Activated CD4-positive, alpha-beta memory T cell treated with anti-CD3 and anti-CD28 coated beads for 36 hours (primary cell): ENCODE measurements at regions of chr1 and their contacts with region 1.

Region 1: DNA sequence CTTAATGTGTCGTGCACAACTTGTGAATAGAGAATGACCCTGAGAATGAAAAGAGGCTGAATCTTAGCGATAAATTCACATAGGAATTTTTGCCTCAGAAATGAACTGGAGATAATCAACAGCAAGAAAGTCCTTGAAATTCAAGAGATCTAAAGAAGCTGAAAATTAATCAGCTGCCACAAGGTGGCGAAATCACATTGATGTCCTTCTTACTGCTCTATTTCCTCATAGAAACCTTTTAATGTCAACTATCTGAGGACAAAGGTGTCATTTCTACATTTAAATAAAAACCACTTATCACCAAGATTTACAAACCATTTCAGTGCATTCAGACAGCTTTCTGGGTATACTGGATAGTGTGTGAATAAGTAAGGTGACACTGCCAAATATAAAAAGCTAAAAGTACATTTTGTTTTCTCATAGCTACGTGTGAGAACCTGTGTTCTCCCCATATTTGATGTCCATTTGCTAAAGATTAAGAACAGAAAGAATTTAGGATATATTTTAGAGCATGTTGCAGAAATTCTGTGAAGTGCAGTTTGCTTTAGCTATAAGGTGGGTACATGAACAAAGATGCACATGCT is 485.3 kb upstream of the PTBP2 start:
- DNase-seq: no peak
- H3K4me3 Mint-ChIP-seq: no peak overlapping the region
- H3K27ac Mint-ChIP-seq: no peak overlapping the region
- H3K4me1 Mint-ChIP-seq: no peaks in the 10 kb centered on the region
- H3K27me3 Mint-ChIP-seq: no peaks in the 10 kb centered on the region

Region 2: GRCh38 chr1:96346708-96347107 is 110.5 kb after region 1 on chr1:
- CTCF ChIA-PET with region 1: no interaction called
- POLR2A ChIA-PET with region 1: no interaction called
- intact Hi-C with region 1: no loop called
- DNase-seq: no peak
- H3K4me3 Mint-ChIP-seq: no peak overlapping the region
- H3K27ac Mint-ChIP-seq: no peak overlapping the region
- H3K4me1 Mint-ChIP-seq: no peaks in the 10 kb centered on the region
- H3K27me3 Mint-ChIP-seq: no peaks in the 10 kb centered on the region

Region 3: DNA sequence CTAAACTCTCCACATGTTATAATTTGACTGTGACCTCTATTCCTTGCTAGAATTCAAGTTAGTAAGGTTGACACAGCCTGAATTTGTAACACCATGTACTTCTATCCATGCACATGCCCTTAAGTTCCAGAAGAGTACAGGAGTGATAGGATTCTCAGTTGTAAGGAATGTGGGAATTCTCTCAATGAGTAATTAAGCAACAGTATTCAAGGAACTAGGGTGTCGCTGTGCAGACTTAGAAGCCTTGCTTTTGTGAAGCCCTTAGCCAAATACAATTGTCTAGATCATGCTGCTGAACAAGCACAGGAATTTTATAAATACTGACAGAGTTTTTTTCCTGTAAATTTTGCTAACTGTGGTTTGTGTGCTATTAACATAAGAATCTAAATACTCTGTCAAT is 209.1 kb after region 1 on chr1:
- CTCF ChIA-PET with region 1: no interaction called
- POLR2A ChIA-PET with region 1: no interaction called
- intact Hi-C with region 1: no loop called
- DNase-seq: no peak
- H3K4me3 Mint-ChIP-seq: no peak overlapping the region
- H3K27ac Mint-ChIP-seq: no peak overlapping the region
- H3K4me1 Mint-ChIP-seq: no peaks in the 10 kb centered on the region
- H3K27me3 Mint-ChIP-seq: no peaks in the 10 kb centered on the region

Region 4: GRCh38 chr1:96756789-96757188 is 520.5 kb after region 1 on chr1:
- CTCF ChIA-PET with region 1: no interaction called
- POLR2A ChIA-PET with region 1: no interaction called
- intact Hi-C with region 1: loop called (anchors 2 kb)
- DNase-seq: no peak
- H3K4me3 Mint-ChIP-seq: no peak overlapping the region
- H3K27ac Mint-ChIP-seq: no peak overlapping the region
- H3K4me1 Mint-ChIP-seq: no peaks in the 10 kb centered on the region
- H3K27me3 Mint-ChIP-seq: no peaks in the 10 kb centered on the region

Region 5: GRCh38 chr1:96845464-96845863 is 609.2 kb after region 1 on chr1:
- CTCF ChIA-PET with region 1: no interaction called
- POLR2A ChIA-PET with region 1: no interaction called
- intact Hi-C with region 1: loop called (anchors 2 kb)
- DNase-seq: peak; percentile 52
- H3K4me3 Mint-ChIP-seq: no peak overlapping the region
- H3K27ac Mint-ChIP-seq: no peak overlapping the region
- H3K4me1 Mint-ChIP-seq: no peaks in the 10 kb centered on the region
- H3K27me3 Mint-ChIP-seq: no peaks in the 10 kb centered on the region